ENCODE measurements at regions of chr12 and their contacts with region 1.

Region 1: DNA sequence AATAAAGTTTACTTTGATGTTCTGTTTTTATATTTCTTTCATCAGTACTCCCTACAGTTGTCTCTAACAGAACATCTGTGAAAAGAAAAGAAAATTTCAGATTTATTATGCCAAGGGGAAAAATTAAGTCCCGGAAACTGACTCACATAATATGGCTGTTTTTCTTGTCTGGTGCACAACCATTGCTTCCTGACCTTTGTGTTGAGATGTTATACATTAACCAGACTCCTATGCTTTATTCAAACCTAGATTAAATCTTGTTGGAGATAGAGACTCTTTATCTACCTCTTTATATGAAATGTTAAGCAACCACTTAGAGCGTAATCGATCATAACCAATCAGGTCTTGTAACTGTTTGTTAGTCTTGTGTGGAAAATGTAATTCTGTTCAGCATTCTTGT is 37.6 kb upstream of the BICD1 start:
- DNase-seq: no peak
- ATAC-seq: no peak
- H3K4me3 ChIP-seq: no peak overlapping the region
- H3K27ac ChIP-seq: no peak overlapping the region
- H3K4me1 ChIP-seq: no peaks in the 10 kb centered on the region
- H3K27me3 ChIP-seq: no peaks in the 10 kb centered on the region
- CTCF ChIP-seq: no peak

Region 2: DNA sequence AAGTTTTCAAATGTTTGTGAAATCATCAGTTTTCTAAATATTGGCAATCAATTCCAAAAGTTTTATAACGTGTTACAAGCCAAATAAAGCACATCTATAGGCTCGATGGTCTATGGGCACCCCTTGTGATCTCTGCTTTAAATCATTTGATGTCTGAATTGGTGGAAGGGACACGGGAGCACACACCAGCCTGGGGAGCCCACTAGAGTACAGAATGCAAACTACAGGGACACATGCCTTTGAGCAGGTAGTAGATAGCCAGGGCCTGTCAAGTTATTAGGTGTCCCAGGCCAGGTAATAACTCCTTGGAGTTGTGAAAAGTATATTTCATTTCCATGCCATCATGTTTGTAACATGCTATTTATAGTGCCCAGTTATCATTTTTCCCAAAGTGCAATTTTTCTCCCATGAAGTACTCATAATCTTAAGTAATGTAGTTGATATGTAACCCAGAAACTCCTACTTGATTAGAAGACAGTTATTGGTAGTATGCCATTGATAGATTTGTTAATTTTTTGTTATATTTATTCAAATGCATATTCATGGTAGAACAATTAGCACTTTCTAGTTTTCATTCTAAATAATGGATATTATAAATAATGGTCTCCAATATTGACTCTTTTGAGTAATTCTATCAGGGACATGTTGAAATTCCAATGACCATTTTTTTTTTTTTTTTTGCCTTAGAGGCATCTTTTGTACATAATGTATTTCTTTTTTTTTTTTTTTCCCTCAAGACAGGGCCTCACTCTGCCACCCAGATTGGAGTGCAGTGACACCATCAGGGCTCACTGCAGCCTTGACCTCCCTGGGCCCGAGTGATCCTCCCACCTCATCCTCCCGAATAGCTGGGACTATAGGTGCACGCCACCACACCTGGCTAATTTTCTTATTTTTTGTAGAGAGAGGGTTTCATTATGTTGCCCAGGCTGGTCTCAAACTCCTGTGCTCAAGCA is 233.4 kb after region 1 on chr12:
- intact Hi-C with region 1: loop called (anchors 10 kb)
- DNase-seq: no peak
- ATAC-seq: peak; percentile 37 to 46
- H3K4me3 ChIP-seq: no peak overlapping the region
- H3K27ac ChIP-seq: no peak overlapping the region
- H3K4me1 ChIP-seq: no peaks in the 10 kb centered on the region
- H3K27me3 ChIP-seq: no peaks in the 10 kb centered on the region
- CTCF ChIP-seq: peak; percentile 42

Measured in lower lobe of right lung (tissue), 2 donors.